ENCODE measurements at regions of chr2 and their contacts with region 1.

Region 1: GRCh38 chr2:20438334-20439192 is 8.3 kb upstream of the RHOB start:
- H3K4me3 ChIP-seq: peak overlapping the region; percentile 2
- H3K27ac ChIP-seq: no peak overlapping the region
- H3K4me1 ChIP-seq: 0 out of 2 replicates have a peak, but pooled peaks cover 2% of the 10 kb centered on the region
- CTCF ChIP-seq: no peak

Region 2: DNA sequence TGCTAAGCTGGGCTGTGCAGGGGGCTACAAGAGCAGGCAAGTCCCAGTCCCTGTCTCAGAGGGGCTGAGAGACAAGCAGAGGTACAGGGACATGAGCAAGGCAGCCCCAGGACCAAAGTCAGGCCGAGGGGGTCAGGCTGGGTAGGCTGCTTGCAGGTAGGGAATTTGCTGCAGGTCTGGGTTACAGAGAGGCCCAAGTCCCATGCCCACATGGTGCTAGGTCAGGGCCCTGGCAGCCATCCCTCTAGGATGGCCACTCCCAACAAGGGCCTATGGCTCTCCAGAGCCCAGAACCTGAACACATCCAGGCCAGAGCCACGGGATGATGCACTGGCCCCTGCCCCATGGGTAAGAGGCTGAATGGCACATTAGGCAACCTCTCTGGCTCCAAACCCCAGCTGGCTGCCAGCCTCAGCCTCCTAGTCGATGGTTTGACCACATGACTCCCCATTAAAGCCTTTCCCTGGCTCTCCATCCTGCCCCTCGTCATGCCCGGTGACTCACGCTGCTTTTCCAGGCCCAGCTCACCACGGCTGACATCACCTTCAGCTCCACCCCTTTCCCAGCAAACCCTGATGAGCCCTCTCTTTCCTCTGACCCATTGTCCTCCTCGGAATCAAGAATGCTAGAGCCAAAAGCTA is 297.3 kb before region 1 on chr2:
- CTCF ChIA-PET with region 1: no interaction called
- POLR2A ChIA-PET with region 1: no interaction called
- H3K4me3 ChIP-seq: no peak overlapping the region
- H3K27ac ChIP-seq: no peak overlapping the region; the same call in 1 of the 2 replicates
- H3K4me1 ChIP-seq: no peaks in the 10 kb centered on the region; the same call in 1 of the 2 replicates
- CTCF ChIP-seq: no peak

Region 3: DNA sequence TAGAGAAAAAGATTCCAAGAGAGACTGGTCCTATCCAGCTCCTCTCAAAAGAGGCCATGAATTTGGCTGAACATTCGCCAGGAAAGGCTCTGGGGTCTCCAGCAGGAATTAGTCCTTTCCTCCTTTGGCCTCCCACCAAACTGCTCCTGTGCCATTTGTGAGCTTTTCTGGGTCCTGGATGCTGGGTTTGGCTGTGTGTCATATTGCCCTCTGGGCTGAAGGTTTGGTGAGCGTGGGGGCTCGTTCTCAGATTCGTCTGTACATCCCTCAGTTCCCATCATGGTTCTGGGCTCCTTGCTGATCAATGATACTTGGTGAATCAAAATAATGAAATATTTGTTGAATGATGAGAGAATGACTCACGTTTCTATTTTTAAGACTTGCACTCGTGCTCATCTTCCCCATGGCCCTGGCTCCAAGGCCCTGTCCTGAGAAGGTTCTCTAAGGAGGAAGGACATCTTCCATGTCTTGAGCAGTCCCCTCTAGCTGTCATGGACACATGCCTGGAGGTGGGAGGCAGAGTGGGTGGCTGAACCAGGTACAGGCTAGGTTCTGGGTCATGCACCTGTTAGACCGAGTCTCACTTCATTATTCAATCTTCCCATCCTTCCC is 39.5 kb before region 1 on chr2:
- CTCF ChIA-PET with region 1: interaction called, 15 read pairs
- POLR2A ChIA-PET with region 1: interaction called, 3 read pairs
- H3K4me3 ChIP-seq: no peak overlapping the region
- H3K27ac ChIP-seq: no peak overlapping the region
- H3K4me1 ChIP-seq: no peaks in the 10 kb centered on the region
- CTCF ChIP-seq: no peak

Region 4: GRCh38 chr2:20755132-20755800 is 316.7 kb after region 1 on chr2:
- CTCF ChIA-PET with region 1: no interaction called
- POLR2A ChIA-PET with region 1: no interaction called
- H3K4me3 ChIP-seq: no peak overlapping the region
- H3K27ac ChIP-seq: no peak overlapping the region
- H3K4me1 ChIP-seq: no peaks in the 10 kb centered on the region
- CTCF ChIP-seq: no peak